Calu3 (cell line): ENCODE measurements at regions of chr6 and their contacts with region 1.

Region 1: DNA sequence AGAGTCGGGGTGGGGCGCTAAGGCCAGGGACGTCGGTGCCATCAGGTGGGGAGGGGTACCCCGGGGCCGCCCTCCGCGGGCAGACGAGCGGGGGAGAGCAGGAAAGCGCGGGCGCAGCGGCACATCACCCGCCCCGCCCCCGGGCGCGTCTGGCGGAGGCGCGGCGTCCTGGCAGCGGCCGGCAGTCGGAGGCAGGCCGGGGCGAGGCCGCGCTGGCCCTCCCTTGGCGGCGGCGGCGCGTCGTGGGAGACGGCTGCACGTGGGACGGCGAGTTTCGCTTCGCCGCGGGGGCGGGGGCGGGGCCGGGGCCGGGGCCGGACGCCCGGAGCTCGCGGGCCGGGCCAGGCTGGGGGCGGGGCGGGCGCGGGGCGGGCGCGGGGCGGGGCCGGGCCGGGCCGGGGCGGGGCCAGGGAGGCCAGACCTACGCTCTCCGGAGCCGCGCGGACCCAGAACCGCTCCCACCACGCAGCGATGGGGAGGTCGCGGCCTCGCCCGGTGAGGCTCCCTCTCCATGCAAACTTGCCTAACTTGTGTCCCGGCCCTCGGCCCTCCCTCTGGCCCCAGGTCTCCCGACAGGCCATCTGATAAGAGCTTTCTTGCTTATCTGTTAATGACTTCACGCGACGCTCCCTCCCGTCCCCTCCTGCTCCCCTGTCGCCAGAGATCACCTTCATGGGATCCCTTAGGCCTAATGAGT is 12.5 kb downstream of the ITPR3 start:
- DNase-seq: peak; percentile 74
- H3K4me3 Mint-ChIP-seq: peak overlapping the region; percentile 81
- H3K27ac Mint-ChIP-seq: peak overlapping the region; percentile 61
- H3K4me1 Mint-ChIP-seq: peaks cover 77% of the 10 kb centered on the region
- H3K27me3 Mint-ChIP-seq: no peaks in the 10 kb centered on the region
- CTCF ChIP-seq: no peak

Region 2: GRCh38 chr6:33620856-33621710 is 12.5 kb before region 1 on chr6 and contains the start of gene ITPR3:
- CTCF ChIA-PET with region 1: interaction called, 15 read pairs
- intact Hi-C with region 1: no loop called
- DNase-seq: peak; percentile 83
- H3K4me3 Mint-ChIP-seq: peak within 1 kb of the TSS; percentile 89
- H3K27ac Mint-ChIP-seq: peak within 1 kb of the TSS; percentile 72
- H3K4me1 Mint-ChIP-seq: peaks cover 54% of the 10 kb centered on the region
- H3K27me3 Mint-ChIP-seq: no peaks in the 10 kb centered on the region
- CTCF ChIP-seq: no peak
- total RNA-seq, gene ITPR3: 136 and 143 TPM in 2 replicates

Region 3: GRCh38 chr6:33717934-33718455 is 84.4 kb after region 1 on chr6:
- CTCF ChIA-PET with region 1: no interaction called
- intact Hi-C with region 1: no loop called
- DNase-seq: no peak
- H3K4me3 Mint-ChIP-seq: no peak overlapping the region
- H3K27ac Mint-ChIP-seq: no peak overlapping the region
- H3K4me1 Mint-ChIP-seq: peaks cover 47% of the 10 kb centered on the region
- H3K27me3 Mint-ChIP-seq: peaks cover 11% of the 10 kb centered on the region
- CTCF ChIP-seq: no peak